Ovary (tissue), 10 donors: ENCODE measurements at regions of chrX and their contacts with region 1.

Region 1: GRCh38 chrX:18401848-18402213 is 23.6 kb upstream of the CDKL5 start:
- DNase-seq: no peak
- H3K4me3 ChIP-seq: no peak overlapping the region
- H3K27ac ChIP-seq: no peak overlapping the region
- H3K4me1 ChIP-seq: peaks cover 2% of the 10 kb centered on the region
- H3K27me3 ChIP-seq: no peaks in the 10 kb centered on the region
- CTCF ChIP-seq: no peak
- EP300 ChIP-seq: no peak
- POLR2A ChIP-seq: no peak

Region 2: DNA sequence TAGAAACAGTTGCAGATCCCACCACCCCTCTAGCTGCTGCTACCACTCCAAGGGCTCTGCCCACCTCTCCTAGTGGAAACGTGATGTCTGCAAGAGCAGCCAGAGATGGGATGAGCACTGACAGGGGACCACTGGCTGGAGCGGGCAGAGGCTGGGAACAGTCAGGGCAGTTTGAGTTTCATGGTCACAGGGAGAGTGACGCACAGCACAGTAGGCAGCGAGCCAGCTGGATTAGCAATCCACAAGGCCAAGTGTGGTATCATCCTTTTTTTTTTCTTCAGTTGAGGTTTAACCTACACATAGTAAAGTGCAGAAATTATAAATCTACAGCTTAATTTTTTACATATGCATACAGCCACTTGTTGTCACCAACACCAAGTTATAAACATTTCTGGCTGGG is 41.0 kb before region 1 on chrX:
- intact Hi-C with region 1: loop called in 1 of 4 experiments (anchors 2 kb)
- DNase-seq: no peak
- H3K4me3 ChIP-seq: no peak overlapping the region
- H3K27ac ChIP-seq: no peak overlapping the region
- H3K4me1 ChIP-seq: no peaks in the 10 kb centered on the region
- H3K27me3 ChIP-seq: no peaks in the 10 kb centered on the region
- CTCF ChIP-seq: no peak
- EP300 ChIP-seq: no peak
- POLR2A ChIP-seq: no peak